ENCODE measurements at regions of chr12 and their contacts with region 1.

Region 1: DNA sequence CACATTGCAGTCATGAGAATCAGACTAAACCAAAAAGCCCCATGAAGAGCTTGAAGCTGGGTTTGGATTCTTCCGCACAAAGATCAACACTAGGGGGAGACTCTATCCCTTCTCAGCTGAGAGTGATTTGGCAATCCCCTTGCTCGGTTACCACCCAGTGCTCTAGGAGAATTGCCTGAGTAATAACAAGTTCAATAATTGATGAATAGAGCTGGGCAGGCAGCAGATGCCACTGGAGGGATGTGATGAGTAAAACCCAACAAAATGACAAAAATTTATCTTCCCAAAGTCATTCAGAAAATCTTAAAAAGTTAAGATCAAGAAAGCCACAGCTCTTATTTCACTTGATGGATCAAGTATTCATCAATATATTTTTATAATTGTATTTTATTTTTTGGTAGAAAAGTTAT is 185.6 kb upstream of the ARID2 start:
- DNase-seq: peak; percentile 59
- H3K4me3 Mint-ChIP-seq: no peak overlapping the region
- H3K27ac Mint-ChIP-seq: no peak overlapping the region
- H3K4me1 Mint-ChIP-seq: peaks cover 18% of the 10 kb centered on the region
- H3K27me3 Mint-ChIP-seq: no peaks in the 10 kb centered on the region
- CTCF ChIP-seq: peak; percentile 70

Region 2: GRCh38 chr12:45518291-45519235 is 25.3 kb before region 1 on chr12:
- CTCF ChIA-PET with region 1: no interaction called
- intact Hi-C with region 1: no loop called
- DNase-seq: peak; percentile 53
- H3K4me3 Mint-ChIP-seq: no peak overlapping the region
- H3K27ac Mint-ChIP-seq: peak overlapping the region; percentile 87
- H3K4me1 Mint-ChIP-seq: peaks cover 14% of the 10 kb centered on the region
- H3K27me3 Mint-ChIP-seq: no peaks in the 10 kb centered on the region
- CTCF ChIP-seq: no peak

Region 3: DNA sequence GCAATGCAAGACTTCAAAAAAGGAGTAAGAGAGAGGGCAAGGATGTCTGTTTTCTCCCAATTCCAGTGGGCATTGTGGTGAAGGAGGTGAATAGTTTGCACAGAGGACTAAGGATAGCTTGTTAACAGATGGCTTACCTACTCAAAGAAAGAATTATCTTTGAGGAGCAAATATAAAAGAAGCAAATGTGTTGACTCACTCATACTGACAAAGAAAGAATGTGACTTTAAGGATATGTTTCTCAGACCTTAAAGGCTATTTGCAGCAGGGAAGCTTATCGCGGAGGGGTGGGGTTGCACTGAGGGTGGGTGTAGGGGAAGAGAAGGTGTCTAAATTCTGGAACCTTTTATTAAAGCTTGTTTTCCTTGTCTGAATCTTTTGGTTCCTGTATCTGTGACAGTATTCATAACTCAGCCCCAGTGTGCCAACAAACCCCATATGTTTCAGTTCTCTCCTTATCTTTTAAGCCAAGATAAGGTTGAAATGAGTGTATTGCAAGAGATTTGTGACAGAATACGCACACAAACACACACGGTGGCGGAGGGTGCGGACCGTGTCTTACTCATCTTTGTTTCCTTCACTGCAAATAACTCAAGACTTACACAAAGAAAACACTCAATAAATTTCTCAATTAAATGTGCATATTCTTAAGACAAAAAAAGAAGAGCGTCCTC is 39.2 kb after region 1 on chr12:
- CTCF ChIA-PET with region 1: interaction called, 3 read pairs
- intact Hi-C with region 1: loop called (anchors 5 kb)
- DNase-seq: peak; percentile 5
- H3K4me3 Mint-ChIP-seq: peak overlapping the region; percentile 17
- H3K27ac Mint-ChIP-seq: peak overlapping the region; percentile 71
- H3K4me1 Mint-ChIP-seq: peaks cover 24% of the 10 kb centered on the region
- H3K27me3 Mint-ChIP-seq: no peaks in the 10 kb centered on the region
- CTCF ChIP-seq: no peak

Region 4: GRCh38 chr12:45728630-45729232 is 184.8 kb after region 1 on chr12:
- CTCF ChIA-PET with region 1: interaction called, 12 read pairs
- intact Hi-C with region 1: loop called (anchors 2 kb)
- DNase-seq: peak; percentile 93
- H3K4me3 Mint-ChIP-seq: peak overlapping the region; percentile 97
- H3K27ac Mint-ChIP-seq: peak overlapping the region; percentile 89
- H3K4me1 Mint-ChIP-seq: no peaks in the 10 kb centered on the region
- H3K27me3 Mint-ChIP-seq: no peaks in the 10 kb centered on the region
- CTCF ChIP-seq: peak; percentile 74

Region 5: DNA sequence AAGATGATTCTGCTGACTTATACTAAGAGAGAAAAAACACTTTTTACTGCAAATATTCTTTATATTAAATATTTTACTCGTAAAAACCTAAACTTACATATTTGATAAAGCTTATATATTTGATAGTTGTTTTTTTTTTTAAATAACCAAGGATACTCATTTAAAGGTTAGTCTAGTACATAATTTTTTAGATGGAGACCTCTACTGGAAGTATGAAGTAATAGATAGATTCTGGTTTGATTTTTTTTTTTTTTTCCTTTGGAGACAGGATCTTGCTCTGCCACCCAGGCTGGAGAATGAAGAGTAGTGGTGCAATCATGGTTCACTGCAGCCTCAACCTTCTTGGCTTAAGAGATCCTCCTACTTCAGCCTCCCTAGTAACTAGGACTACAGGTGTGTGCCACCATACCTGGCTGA is 202.0 kb after region 1 on chr12:
- CTCF ChIA-PET with region 1: interaction called, 3 read pairs
- intact Hi-C with region 1: loop called (anchors 5 kb)
- DNase-seq: no peak
- H3K4me3 Mint-ChIP-seq: no peak overlapping the region
- H3K27ac Mint-ChIP-seq: no peak overlapping the region
- H3K4me1 Mint-ChIP-seq: no peaks in the 10 kb centered on the region
- H3K27me3 Mint-ChIP-seq: no peaks in the 10 kb centered on the region
- CTCF ChIP-seq: no peak

Measured in Calu3 (cell line).